ENCODE measurements at regions of chr12 and their contacts with region 1.

Region 1: DNA sequence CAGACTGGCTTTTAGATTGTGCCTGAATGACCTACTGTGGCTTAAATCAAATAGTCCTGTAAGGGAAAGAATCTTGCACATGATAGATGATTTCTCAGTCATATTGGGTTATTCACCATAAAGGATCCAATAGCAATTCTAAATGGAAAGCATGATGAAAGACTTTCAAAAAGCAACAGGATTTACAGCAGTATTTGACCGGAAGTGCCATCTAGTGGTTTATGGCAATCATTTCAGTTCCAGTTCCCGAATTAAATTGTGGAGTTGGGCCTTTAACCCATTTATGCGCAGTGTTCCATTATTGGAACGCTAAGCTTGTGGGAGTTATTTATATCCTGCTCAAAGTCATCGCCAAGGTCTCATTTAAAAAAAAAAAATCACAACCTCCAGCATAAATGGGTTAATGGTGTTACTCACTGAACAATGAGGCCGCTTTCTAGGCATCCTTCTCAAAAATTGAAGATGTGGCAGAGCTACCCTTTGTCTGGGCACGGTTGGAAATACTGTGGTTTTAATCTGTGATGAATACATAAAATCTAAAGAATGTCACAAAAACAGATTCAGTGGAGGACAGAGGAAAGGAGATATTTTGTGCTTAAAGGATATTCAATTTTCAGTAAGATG is 60.8 kb upstream of the REP15 start:
- DNase-seq: peak; percentile 78

Region 2: GRCh38 chr12:27523642-27524493 is 111.6 kb before region 1 on chr12 and contains the start of gene PPFIBP1:
- in situ Hi-C with region 1: loop called (anchors 25 kb)
- DNase-seq: peak; percentile 100